ENCODE measurements at regions of chr17 and their contacts with region 1.

Region 1: DNA sequence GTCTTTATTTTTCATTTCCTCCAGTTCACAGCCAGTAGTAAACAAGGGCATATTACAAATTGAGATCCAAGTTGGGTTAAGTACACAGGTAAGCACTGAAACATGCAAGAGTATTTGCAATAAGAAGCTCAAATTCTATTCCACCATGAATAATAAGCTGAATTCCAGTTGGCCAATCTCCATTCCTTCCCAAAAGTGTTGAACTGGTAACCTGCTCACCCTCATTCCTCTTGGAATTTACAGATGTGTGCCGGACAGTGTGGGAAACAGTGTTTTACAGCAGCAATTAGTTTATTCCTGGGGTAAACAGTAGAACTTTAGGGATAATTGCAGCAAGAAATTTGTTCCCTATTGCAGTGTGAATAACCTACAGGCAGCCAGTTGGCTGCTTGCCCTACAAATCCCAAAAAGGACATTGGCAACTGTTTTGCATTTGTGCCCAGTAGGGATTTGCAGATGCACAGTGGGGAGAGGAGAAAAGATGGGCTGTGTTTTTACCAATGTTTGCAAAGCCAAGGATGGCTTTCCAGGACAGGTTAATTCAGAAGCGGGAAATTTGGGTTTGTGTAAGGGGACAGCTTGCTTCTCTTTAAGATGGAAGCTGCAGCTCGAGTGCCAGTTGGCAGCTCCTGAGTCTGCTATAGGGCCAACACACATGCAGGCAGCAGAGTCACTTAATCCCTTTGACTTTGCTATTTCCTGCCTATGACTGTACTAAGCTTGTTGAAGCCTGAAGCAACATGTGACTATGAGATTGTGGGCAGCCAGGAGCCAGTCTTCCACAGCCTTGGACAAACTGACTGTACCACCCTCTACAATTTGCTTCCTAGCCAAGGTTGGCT is 318.9 kb downstream of the MAP2K6 start:
- DNase-seq: peak; percentile 93
- H3K4me3 ChIP-seq: no peak overlapping the region
- H3K27ac ChIP-seq: peak overlapping the region; percentile 53
- H3K4me1 ChIP-seq: peaks cover 43% of the 10 kb centered on the region
- H3K27me3 ChIP-seq: no peaks in the 10 kb centered on the region
- CTCF ChIP-seq: peak in 1 of 2 donors; percentile 6

Region 2: GRCh38 chr17:69690531-69690930 is 42.9 kb before region 1 on chr17:
- CTCF ChIA-PET with region 1: no interaction called
- dilution Hi-C with region 1: no loop called
- in situ Hi-C with region 1: no loop called
- intact Hi-C with region 1: no loop called
- DNase-seq: no peak
- H3K4me3 ChIP-seq: no peak overlapping the region
- H3K27ac ChIP-seq: no peak overlapping the region
- H3K4me1 ChIP-seq: no peaks in the 10 kb centered on the region
- H3K27me3 ChIP-seq: no peaks in the 10 kb centered on the region
- CTCF ChIP-seq: no peak

Region 3: DNA sequence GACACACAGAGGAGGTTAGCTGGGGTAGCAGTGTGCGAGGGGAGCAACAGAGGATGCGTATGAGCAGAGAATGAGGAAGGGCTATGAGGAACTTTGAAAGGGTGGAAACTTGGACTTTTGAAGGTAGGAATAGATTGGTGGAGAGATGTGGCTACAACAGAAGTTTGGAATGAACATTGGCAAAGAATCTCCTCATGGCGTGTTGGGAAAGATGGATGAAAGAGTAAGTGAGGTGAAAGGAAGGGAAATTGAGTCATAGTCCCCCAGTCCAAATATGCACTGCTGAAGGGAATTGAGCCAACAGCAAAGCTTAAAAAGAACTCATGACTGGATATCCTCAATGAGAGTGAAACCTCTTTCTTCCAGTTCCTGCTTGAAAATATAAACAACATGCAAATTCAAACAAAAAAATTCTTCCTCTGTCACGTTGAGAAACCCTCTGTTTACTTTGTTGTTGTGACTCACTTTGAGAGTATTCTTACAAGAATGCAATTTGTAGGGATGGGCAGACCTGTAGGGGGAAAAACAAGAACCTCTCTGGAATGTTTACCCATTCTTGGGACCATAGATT is 28.4 kb after region 1 on chr17:
- CTCF ChIA-PET with region 1: no interaction called
- dilution Hi-C with region 1: no loop called
- in situ Hi-C with region 1: no loop called
- intact Hi-C with region 1: loop called (anchors 1 kb)
- DNase-seq: peak; percentile 87
- H3K4me3 ChIP-seq: no peak overlapping the region
- H3K27ac ChIP-seq: peak overlapping the region; percentile 88
- H3K4me1 ChIP-seq: peaks cover 44% of the 10 kb centered on the region
- H3K27me3 ChIP-seq: no peaks in the 10 kb centered on the region
- CTCF ChIP-seq: no peak

Region 4: GRCh38 chr17:69819316-69820087 is 86.1 kb after region 1 on chr17:
- CTCF ChIA-PET with region 1: no interaction called
- dilution Hi-C with region 1: loop called (anchors 5 kb)
- in situ Hi-C with region 1: no loop called
- intact Hi-C with region 1: no loop called
- DNase-seq: no peak
- H3K4me3 ChIP-seq: no peak overlapping the region
- H3K27ac ChIP-seq: no peak overlapping the region
- H3K4me1 ChIP-seq: peaks cover 4% of the 10 kb centered on the region
- H3K27me3 ChIP-seq: no peaks in the 10 kb centered on the region
- CTCF ChIP-seq: no peak

Measured in mammary epithelial cell (primary cell).